ENCODE measurements at regions of chr5 and their contacts with region 1.

Region 1: DNA sequence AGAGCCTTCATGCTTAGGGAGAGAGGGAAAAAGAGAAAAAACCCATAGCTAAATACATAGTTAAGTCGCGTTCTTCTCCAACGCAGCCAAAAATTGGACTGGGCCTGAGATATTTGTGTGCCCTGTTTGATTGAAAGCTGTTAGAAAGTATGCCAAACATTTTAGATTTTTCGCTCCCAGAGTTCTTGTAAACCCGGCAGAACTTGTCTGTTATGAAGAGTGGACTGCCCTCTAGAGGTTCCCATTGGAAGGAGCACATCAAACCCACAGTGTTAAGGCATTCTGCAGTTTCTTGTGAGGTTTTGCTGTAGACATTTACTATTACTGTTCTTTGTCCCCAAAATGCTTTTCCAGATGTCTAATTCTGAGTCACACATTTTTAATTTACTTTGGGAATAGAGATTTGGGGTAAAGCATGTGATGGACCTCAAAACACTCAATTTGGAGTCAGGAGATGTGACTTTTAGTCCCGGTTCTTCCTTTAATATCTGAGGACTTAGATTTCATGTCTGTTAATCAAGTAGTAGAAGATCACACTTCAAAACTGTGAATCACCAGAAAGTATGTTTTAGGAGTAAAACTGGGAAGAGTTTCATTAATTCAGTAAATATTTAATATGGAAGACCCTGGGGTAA is 96.6 kb downstream of the PCSK1 start:
- DNase-seq: peak; percentile 69
- H3K4me3 Mint-ChIP-seq: no peak overlapping the region
- H3K27ac Mint-ChIP-seq: no peak overlapping the region
- H3K4me1 Mint-ChIP-seq: peaks cover 8% of the 10 kb centered on the region
- H3K27me3 Mint-ChIP-seq: no peaks in the 10 kb centered on the region

Region 2: DNA sequence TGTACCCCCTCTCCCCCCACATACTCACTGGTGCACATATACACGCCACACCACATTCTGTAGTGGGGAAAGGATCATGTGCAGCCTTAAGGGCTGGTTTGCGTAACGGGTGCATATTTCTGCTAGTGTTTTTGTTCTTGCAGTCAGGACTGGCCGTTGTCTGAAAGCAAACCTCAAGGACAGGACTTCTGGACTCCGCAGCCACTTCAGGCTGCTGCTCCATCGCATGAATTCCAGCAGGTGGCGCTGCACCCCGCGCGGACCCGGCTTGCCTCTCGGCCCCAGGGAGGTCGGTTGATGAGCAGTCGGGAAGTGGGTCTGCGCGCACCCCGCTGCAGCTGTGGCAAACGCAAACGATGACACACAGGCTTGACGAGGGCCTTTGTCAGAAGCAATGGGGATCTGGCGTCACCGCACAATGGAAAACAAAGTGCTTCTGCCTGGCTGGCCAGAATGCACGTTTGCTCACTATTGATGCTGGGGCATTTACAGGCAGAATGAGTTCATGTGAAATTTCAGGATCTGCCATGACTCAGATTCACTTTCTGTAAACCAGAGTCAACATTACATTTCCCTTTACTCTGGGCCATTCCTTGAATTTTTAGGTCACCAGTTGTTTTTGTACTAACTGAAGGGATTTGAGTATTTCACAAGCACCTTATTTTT is 477.7 kb before region 1 on chr5:
- CTCF ChIA-PET with region 1: interaction called, 75 read pairs
- POLR2A ChIA-PET with region 1: interaction called, 3 read pairs
- DNase-seq: peak; percentile 92
- H3K4me3 Mint-ChIP-seq: peak overlapping the region; percentile 43
- H3K27ac Mint-ChIP-seq: peak overlapping the region; percentile 28
- H3K4me1 Mint-ChIP-seq: peaks cover 50% of the 10 kb centered on the region
- H3K27me3 Mint-ChIP-seq: no peaks in the 10 kb centered on the region

Region 3: GRCh38 chr5:95892780-95893354 is 443.6 kb before region 1 on chr5:
- CTCF ChIA-PET with region 1: interaction called, 15 read pairs
- POLR2A ChIA-PET with region 1: no interaction called
- DNase-seq: peak; percentile 48
- H3K4me3 Mint-ChIP-seq: no peak overlapping the region
- H3K27ac Mint-ChIP-seq: no peak overlapping the region
- H3K4me1 Mint-ChIP-seq: peaks cover 13% of the 10 kb centered on the region
- H3K27me3 Mint-ChIP-seq: no peaks in the 10 kb centered on the region

Region 4: GRCh38 chr5:95961617-95962474 is 374.6 kb before region 1 on chr5 and contains the start of gene ELL2:
- CTCF ChIA-PET with region 1: interaction called, 30 read pairs
- POLR2A ChIA-PET with region 1: interaction called, 9 read pairs
- DNase-seq: peak; percentile 99
- H3K4me3 Mint-ChIP-seq: peak within 1 kb of the TSS; percentile 95
- H3K27ac Mint-ChIP-seq: peak within 1 kb of the TSS; percentile 98
- H3K4me1 Mint-ChIP-seq: peaks cover 62% of the 10 kb centered on the region
- H3K27me3 Mint-ChIP-seq: no peaks in the 10 kb centered on the region
- total RNA-seq, gene ELL2: 54.4 to 59.0 TPM

Region 5: DNA sequence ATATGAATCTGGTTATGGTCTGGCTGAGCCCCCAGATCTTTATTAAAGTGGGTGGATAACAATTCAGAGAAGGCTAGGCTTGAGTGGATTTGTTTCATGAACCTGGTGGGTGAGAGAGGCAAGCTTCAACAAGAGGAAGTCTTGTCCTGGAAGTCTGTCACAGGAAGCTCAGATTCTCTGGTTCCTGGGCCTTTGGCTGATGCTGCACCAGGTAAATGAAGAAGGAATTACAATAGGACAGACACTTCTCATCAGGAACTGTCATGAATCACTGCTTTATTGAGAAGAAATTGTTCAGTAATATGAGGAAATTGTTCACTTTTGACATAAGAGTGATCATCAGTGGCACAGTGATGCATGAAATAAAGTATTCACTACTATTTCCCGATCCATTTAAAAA is 207.2 kb before region 1 on chr5:
- CTCF ChIA-PET with region 1: no interaction called
- POLR2A ChIA-PET with region 1: no interaction called
- DNase-seq: no peak
- H3K4me3 Mint-ChIP-seq: no peak overlapping the region
- H3K27ac Mint-ChIP-seq: no peak overlapping the region
- H3K4me1 Mint-ChIP-seq: no peaks in the 10 kb centered on the region
- H3K27me3 Mint-ChIP-seq: peaks cover 4% of the 10 kb centered on the region

Region 6: DNA sequence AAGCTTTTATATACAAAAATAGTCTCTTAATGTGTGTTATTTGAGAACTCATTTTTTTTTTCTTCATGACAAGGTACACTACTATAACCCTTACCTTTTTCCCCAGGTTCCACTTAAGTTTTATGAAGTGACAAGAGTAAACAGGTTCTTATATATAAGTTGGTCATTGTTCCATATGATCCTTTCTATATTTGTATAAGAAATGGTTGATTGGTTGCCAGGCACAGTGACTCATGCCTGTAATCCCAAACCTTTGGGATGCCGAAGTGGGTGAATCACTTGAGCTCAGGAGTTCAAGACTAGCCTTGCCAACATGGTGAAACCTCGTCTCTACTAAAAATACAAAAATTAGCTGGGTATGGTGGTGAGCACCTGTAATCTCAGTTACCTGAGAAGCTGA is 11.8 kb before region 1 on chr5:
- CTCF ChIA-PET with region 1: interaction called, 13 read pairs
- POLR2A ChIA-PET with region 1: no interaction called
- DNase-seq: no peak
- H3K4me3 Mint-ChIP-seq: no peak overlapping the region
- H3K27ac Mint-ChIP-seq: no peak overlapping the region
- H3K4me1 Mint-ChIP-seq: peaks cover 3% of the 10 kb centered on the region
- H3K27me3 Mint-ChIP-seq: no peaks in the 10 kb centered on the region

Region 7: DNA sequence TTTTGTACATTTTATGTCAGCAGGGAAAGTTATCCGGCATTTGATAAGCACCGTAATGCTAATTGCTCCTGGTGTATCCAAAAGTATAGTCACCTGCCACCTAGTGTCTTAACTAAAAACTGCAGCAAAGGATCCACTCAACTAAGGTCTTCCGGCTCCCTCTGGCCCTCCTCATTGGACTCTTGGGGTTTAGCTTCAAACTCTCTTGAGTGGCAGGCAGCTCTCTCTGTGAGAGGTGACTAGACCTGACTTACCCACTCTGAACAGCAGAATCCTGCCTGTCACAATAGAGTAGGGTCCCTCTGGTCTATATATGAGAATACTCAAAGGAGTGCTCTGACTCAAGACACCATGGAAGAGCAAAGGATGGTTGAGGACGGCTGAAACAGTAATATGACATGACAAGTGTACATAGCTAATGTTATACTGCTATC is 265.4 kb after region 1 on chr5:
- CTCF ChIA-PET with region 1: interaction called, 29 read pairs
- POLR2A ChIA-PET with region 1: no interaction called
- DNase-seq: peak; percentile 45
- H3K4me3 Mint-ChIP-seq: no peak overlapping the region
- H3K27ac Mint-ChIP-seq: no peak overlapping the region
- H3K4me1 Mint-ChIP-seq: peaks cover 1% of the 10 kb centered on the region
- H3K27me3 Mint-ChIP-seq: peaks cover 18% of the 10 kb centered on the region